Dorsolateral prefrontal cortex (tissue), 120 donors: ENCODE measurements at regions of chr14 and their contacts with region 1.

Region 1: GRCh38 chr14:102683399-102684297 is 91.2 kb downstream of the RCOR1 start:
- DNase-seq: no peak
- H3K4me3 ChIP-seq: no peak overlapping the region
- H3K27ac ChIP-seq: no peak overlapping the region
- H3K27me3 ChIP-seq: no peaks in the 10 kb centered on the region
- CTCF ChIP-seq: no peak

Region 2: GRCh38 chr14:102008891-102009290 is 674.8 kb before region 1 on chr14:
- intact Hi-C with region 1: no loop called
- DNase-seq: no peak
- H3K4me3 ChIP-seq: no peak overlapping the region
- H3K27ac ChIP-seq: peak overlapping the region in 10 of 59 donors; percentile 6 to 61 (median 36)
- H3K27me3 ChIP-seq: no peaks in the 10 kb centered on the region
- CTCF ChIP-seq: no peak

Region 3: DNA sequence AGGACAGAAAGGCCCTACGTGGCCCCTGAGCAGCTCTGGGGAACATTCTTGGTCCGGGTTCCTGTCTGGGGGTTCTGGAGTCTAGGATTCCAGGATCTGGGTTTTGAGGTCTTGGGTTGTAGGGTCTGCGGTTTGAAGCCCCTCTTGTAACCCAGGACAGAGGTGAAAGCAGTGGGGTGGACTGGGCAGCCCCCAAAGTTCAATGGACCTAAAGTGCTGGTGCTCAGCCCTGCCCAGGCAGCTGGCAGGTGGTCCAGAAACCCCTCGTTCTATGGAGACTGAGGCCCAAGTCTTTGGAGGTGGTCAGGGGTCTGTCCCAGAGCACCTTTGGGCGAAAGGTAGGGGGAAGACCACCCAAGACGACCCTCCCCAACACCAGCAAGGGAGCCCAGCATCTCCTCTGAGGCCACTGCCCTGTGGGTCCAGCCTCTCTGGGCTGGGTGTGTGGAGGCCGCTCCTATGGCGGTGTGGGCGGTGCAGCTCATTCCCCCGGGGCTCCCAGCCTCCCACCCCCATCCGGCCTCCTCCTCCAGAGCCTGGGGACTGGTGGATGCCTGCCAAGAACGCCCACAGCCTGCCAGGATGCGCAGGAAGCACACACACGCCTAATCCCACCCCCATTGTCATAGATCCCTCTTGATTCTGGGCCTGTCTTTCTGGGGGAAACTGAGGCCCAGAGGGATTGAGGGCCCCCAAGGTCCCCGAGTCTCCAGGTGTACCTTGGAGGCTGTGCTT is 143.9 kb before region 1 on chr14:
- intact Hi-C with region 1: loop called in 1 of 2 experiments (anchors 10 kb)
- DNase-seq: no peak
- H3K4me3 ChIP-seq: no peak overlapping the region
- H3K27ac ChIP-seq: no peak overlapping the region
- H3K27me3 ChIP-seq: peaks cover 0 to 27% (median 14%) of the 10 kb centered on the region in 45 donors
- CTCF ChIP-seq: no peak

Region 4: DNA sequence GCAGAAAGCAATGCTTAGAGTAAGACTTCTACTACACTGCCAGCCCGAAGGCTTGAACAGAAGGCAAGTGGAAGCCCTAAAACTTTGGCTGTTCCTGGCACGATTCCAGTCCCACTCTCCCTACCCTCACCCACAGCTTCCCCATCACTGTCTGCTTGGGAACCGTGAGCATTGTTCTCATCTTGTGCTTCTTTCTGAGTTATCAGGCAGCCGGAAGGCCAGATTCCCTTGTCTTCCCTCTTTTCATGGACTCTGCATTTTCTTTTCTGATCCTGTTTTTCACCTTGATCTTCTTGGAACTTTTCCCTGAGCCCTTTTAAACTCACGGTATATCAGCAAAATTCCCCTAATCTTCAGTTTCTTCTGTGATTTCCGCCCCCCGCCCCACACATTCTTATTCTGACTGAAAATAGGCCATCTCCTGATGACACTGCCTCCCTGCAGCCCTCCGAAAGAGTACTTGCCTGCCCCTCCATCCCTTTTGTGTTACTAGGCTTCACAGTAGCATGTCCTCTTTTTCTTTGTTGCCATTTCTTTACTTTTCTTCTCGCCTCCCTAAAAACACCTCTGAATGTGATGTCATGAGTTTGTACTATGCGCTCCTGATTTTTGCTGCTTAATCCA is 61.3 kb before region 1 on chr14:
- intact Hi-C with region 1: no loop called
- DNase-seq: no peak
- H3K4me3 ChIP-seq: no peak overlapping the region
- H3K27ac ChIP-seq: no peak overlapping the region
- H3K27me3 ChIP-seq: no peaks in the 10 kb centered on the region
- CTCF ChIP-seq: no peak

Region 5: GRCh38 chr14:102768223-102769048 is 84.8 kb after region 1 on chr14:
- intact Hi-C with region 1: no loop called
- DNase-seq: no peak
- H3K4me3 ChIP-seq: no peak overlapping the region
- H3K27ac ChIP-seq: peak overlapping the region in 8 of 59 donors; percentile 20 to 62 (median 38)
- H3K27me3 ChIP-seq: no peaks in the 10 kb centered on the region
- CTCF ChIP-seq: no peak